Activated CD8-positive, alpha-beta T cell treated with anti-CD3 and anti-CD28 coated beads, Interleukin-2, amount 10 ng/mL, durations not matched to agents 7 days and 5 days (primary cell): ENCODE measurements at regions of chr11 and their contacts with region 1.

Region 1: DNA sequence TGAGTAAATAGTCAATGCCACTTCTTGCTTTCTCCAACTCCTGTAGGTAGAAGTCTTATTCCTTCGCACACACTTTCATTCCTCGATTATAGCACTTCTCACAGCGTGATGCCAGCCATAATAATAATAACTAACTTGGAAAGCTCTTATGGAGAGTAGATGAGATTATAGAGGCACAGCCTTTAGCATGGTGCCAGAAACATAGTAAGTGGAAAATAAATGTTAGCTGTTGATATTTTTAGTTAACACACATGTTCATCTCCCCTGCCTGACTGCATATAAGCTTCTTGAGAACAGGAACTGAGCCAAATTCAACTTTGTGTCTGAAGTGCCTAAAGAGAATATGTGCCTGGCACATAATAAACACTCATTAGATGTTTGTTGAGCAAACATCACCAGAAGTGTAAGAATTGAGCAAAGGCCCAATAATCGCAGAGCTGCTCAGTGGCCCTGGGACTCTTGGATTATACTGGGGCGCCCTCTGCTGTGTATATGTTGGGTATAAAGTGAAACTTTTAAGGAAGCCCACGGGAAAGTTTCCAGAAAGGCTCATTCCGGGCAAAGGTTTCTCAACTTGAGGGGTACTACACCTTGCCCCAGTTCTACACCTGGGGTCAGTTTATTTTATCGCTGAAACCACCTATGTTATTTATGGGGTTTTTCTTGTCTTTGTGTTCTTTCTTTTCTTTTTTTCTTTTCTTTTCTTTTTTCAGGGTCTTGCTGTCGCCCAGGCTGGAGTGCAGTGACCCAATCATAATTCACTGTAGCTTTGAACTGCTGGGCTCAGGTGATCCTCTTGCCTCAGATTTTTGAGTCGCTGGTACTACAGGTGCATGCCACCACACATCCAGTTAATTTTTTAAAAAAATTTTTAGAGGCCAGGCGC is 22.3 kb downstream of the SLN start:
- DNase-seq: peak; percentile 71
- ATAC-seq: peak; percentile 82
- H3K4me3 Mint-ChIP-seq: no peak overlapping the region
- H3K27ac Mint-ChIP-seq: no peak overlapping the region
- H3K4me1 Mint-ChIP-seq: no peaks in the 10 kb centered on the region
- H3K27me3 Mint-ChIP-seq: peaks cover 14% of the 10 kb centered on the region

Region 2: DNA sequence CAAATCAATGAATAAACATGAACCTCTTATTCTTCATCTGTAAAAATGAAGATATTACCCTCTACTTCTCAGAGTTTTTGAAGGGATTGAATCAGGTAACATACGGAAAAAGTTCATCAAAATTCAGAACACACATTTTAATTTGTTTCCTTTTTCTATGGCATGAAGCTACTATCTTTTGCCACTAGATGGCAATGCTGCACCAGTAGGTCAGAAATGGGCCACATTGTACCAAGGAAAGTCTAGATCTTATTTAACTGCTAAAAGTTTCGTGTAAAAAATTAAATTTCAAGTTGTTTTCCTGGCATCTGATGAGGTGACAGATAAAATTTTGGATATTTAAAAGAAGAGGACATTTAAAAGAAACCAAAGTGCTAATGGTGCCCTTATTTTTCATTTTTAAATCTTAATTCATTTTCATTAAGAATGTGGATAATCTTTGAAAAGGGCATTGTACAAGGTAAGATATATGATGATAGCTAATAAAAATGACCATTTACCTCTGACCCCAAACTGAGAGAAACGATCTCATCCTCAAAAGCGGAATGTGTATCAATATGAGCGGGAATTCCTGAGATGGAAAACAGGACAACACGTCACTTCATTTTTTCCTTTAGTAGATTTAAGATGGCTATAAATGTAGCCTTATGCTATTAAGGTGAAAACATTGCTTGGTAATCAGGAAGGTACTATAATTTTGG is 140.2 kb before region 1 on chr11:
- CTCF ChIA-PET with region 1: interaction called, 53 read pairs
- POLR2A ChIA-PET with region 1: no interaction called
- DNase-seq: peak; percentile 46
- ATAC-seq: peak; percentile 58
- H3K4me3 Mint-ChIP-seq: no peak overlapping the region
- H3K27ac Mint-ChIP-seq: no peak overlapping the region
- H3K4me1 Mint-ChIP-seq: no peaks in the 10 kb centered on the region
- H3K27me3 Mint-ChIP-seq: no peaks in the 10 kb centered on the region

Region 3: GRCh38 chr11:107565219-107565937 is 124.2 kb before region 1 on chr11 and contains the start of gene ALKBH8:
- CTCF ChIA-PET with region 1: interaction called, 47 read pairs
- POLR2A ChIA-PET with region 1: no interaction called
- DNase-seq: peak; percentile 87
- ATAC-seq: peak; percentile 98
- H3K4me3 Mint-ChIP-seq: peak within 1 kb of the TSS; percentile 87
- H3K27ac Mint-ChIP-seq: peak within 1 kb of the TSS; percentile 94
- H3K4me1 Mint-ChIP-seq: peaks cover 51% of the 10 kb centered on the region
- H3K27me3 Mint-ChIP-seq: no peaks in the 10 kb centered on the region
- total RNA-seq, gene ALKBH8: 11.1 to 11.3 TPM

Region 4: GRCh38 chr11:107573438-107573837 is 116.1 kb before region 1 on chr11:
- CTCF ChIA-PET with region 1: interaction called, 42 read pairs
- POLR2A ChIA-PET with region 1: no interaction called
- DNase-seq: no peak
- ATAC-seq: no peak
- H3K4me3 Mint-ChIP-seq: no peak overlapping the region
- H3K27ac Mint-ChIP-seq: no peak overlapping the region
- H3K4me1 Mint-ChIP-seq: no peaks in the 10 kb centered on the region
- H3K27me3 Mint-ChIP-seq: peaks cover 10% of the 10 kb centered on the region